Calu3 (cell line): ENCODE measurements at regions of chr18 and their contacts with region 1.

Region 1: DNA sequence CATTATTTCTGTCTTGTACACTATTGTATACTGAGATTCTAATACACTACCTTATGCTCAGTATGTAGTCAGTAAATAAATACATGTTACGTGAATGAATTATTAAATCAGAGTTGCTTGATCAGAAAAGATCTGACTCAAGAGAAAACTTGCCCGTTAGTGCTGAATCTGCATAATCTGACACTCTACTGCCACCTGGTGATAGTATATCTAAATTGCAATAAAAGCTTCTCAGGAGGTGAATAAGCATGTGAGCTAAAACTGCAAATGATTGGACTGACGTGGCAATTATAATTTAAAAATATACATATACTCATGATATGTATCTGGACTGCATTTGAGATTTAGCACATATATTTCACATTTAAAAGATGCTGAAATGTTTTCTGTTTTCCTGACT is 70.4 kb downstream of the KIAA1328 start:
- DNase-seq: no peak
- H3K4me3 Mint-ChIP-seq: no peak overlapping the region
- H3K27ac Mint-ChIP-seq: no peak overlapping the region
- H3K4me1 Mint-ChIP-seq: no peaks in the 10 kb centered on the region
- H3K27me3 Mint-ChIP-seq: no peaks in the 10 kb centered on the region
- CTCF ChIP-seq: peak; percentile 26

Region 2: DNA sequence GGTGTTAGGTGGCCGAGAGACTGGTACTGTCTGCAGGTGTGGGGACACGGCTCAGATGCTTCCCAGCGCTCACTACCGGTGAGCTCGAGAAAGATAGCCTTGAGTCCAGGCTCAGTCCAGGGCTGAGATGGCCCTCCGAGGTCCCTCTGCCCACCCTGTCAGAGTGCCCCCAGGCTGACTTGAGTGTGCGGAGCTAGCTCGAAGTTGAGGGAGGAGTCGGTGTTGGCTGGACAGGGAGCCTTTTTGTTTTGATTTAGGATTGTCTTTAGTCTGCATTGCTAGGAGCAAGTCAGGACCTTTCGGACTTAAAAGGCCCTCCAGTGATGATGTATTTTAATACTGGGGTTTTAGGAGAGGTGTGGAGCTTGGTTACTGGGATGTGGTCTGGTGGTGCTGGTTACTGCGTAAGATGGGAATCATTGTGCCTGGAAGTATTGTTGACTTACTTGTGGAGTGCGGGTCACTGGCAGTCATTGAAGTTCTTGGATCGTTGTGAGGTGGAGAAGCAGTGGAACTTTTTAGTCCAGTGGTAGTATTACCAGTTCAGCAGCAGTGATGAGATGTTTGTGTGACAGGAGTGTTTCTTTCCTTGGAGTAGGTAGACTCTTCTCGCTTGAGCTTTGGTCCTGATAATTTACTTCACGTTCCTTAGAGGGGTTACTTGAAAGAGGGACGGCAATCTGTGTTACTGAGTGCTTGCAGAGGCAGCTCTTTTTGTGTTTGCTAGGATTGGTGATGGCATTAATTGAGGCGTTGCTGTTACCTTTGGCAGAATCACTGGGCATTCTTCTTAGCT is 69.7 kb before region 1 on chr18:
- CTCF ChIA-PET with region 1: interaction called, 8 read pairs
- intact Hi-C with region 1: loop called (anchors 5 kb)
- DNase-seq: no peak
- H3K4me3 Mint-ChIP-seq: peak overlapping the region; percentile 95
- H3K27ac Mint-ChIP-seq: peak overlapping the region; percentile 91
- H3K4me1 Mint-ChIP-seq: peaks cover 32% of the 10 kb centered on the region
- H3K27me3 Mint-ChIP-seq: no peaks in the 10 kb centered on the region
- CTCF ChIP-seq: no peak